ENCODE measurements at regions of chr17 and their contacts with region 1.

Region 1: DNA sequence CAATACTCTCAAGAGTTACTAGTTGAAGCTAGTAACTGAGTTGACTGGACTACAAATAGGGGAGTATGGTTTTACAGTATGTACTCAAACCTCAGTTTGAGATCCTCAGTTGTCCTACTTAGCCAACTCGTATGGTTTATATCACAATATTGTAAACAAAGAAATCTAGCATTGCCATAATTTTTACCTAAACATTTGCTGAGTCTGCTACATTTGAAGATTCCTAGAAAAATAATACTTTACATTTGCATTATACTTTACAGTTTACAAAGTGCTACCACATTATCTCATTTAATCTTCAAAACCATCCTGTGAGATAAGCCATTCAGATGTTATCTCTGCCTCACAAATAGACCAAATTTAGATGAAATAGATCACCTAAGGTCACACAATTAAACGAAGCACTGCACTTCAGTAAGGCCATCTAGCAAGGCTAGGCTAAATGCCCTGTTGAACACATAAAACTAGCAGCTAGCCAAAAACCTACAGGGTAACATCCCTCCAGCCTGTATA is 16.3 kb downstream of the CBX1 start:
- DNase-seq: no peak
- H3K4me3 Mint-ChIP-seq: no peak overlapping the region
- H3K27ac Mint-ChIP-seq: no peak overlapping the region
- H3K4me1 Mint-ChIP-seq: peaks cover 8% of the 10 kb centered on the region
- H3K27me3 Mint-ChIP-seq: no peaks in the 10 kb centered on the region

Region 2: GRCh38 chr17:48068491-48068961 is 16.5 kb before region 1 on chr17:
- CTCF ChIA-PET with region 1: interaction called, 23 read pairs
- POLR2A ChIA-PET with region 1: no interaction called
- DNase-seq: no peak
- H3K4me3 Mint-ChIP-seq: no peak overlapping the region
- H3K27ac Mint-ChIP-seq: no peak overlapping the region
- H3K4me1 Mint-ChIP-seq: no peaks in the 10 kb centered on the region
- H3K27me3 Mint-ChIP-seq: no peaks in the 10 kb centered on the region

Region 3: GRCh38 chr17:48107168-48108132 is 22.5 kb after region 1 on chr17 and contains the start of gene SNX11:
- CTCF ChIA-PET with region 1: interaction called, 29 read pairs
- POLR2A ChIA-PET with region 1: interaction called, 5 read pairs
- DNase-seq: peak; percentile 93
- H3K4me3 Mint-ChIP-seq: peak within 1 kb of the TSS; percentile 94
- H3K27ac Mint-ChIP-seq: peak within 1 kb of the TSS; percentile 85
- H3K4me1 Mint-ChIP-seq: peaks cover 73% of the 10 kb centered on the region
- H3K27me3 Mint-ChIP-seq: no peaks in the 10 kb centered on the region
- total RNA-seq, gene SNX11: 22.6 to 22.8 TPM

Region 4: GRCh38 chr17:48123111-48123510 is 38.1 kb after region 1 on chr17:
- CTCF ChIA-PET with region 1: interaction called, 12 read pairs
- POLR2A ChIA-PET with region 1: interaction called, 3 read pairs
- DNase-seq: no peak
- H3K4me3 Mint-ChIP-seq: no peak overlapping the region
- H3K27ac Mint-ChIP-seq: no peak overlapping the region
- H3K4me1 Mint-ChIP-seq: peaks cover 4% of the 10 kb centered on the region
- H3K27me3 Mint-ChIP-seq: no peaks in the 10 kb centered on the region

Region 5: GRCh38 chr17:48131216-48131824 is 46.3 kb after region 1 on chr17:
- CTCF ChIA-PET with region 1: interaction called, 74 read pairs
- POLR2A ChIA-PET with region 1: interaction called, 5 read pairs
- DNase-seq: peak; percentile 41
- H3K4me3 Mint-ChIP-seq: no peak overlapping the region
- H3K27ac Mint-ChIP-seq: no peak overlapping the region
- H3K4me1 Mint-ChIP-seq: no peaks in the 10 kb centered on the region
- H3K27me3 Mint-ChIP-seq: no peaks in the 10 kb centered on the region

Region 6: DNA sequence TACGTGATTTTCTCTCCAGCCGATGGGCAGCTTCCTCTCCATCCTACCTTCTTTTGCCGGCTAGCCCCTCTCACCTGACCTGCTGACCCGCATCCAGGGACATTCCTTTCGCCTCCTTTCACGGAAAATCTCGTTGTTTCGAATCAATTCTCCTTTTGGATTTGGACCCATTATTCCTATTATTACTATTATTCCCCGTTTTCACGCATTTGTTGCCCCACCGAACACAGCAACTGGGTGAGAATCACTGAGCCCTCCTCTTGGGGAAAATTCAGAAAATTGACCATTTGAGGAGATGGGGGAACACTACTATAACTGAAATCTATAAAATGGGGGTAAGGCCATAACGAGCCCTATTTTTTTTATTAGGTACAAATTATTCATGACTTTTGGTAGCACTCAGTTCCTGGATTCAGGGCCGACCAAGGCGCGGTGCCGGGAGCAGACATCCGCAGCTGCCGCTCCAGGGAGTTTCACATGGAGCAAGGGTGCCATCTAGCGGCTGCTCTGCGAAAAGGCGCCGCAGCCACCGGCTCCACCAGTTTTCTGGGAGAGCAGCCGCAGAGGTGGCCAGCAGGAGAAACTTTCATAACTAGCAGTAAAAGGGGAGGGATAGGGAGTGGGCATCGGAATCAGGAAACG is 533.4 kb after region 1 on chr17:
- CTCF ChIA-PET with region 1: interaction called, 12 read pairs
- POLR2A ChIA-PET with region 1: no interaction called
- DNase-seq: peak; percentile 84
- H3K4me3 Mint-ChIP-seq: no peak overlapping the region
- H3K27ac Mint-ChIP-seq: no peak overlapping the region
- H3K4me1 Mint-ChIP-seq: peaks cover 32% of the 10 kb centered on the region
- H3K27me3 Mint-ChIP-seq: peaks cover 93% of the 10 kb centered on the region

Measured in activated CD4-positive, alpha-beta memory T cell treated with anti-CD3 and anti-CD28 coated beads, Interleukin-2, amount 10 ng/mL, durations not matched to agents 7 days and 5 days (primary cell).